Adrenal gland (tissue), 19 donors: ENCODE measurements at regions of chr1 and their contacts with region 1.

Region 1: GRCh38 chr1:238252033-238252802 is 361.5 kb upstream of the ZP4 start:
- DNase-seq: peak; percentile 26 to 81 (median 59)
- H3K4me3 ChIP-seq: no peak overlapping the region
- H3K27ac ChIP-seq: no peak overlapping the region
- H3K4me1 ChIP-seq: no peaks in the 10 kb centered on the region
- H3K27me3 ChIP-seq: no peaks in the 10 kb centered on the region
- CTCF ChIP-seq: peak; percentile 29 to 52 (median 42)
- POLR2A ChIP-seq: no peak

Region 2: GRCh38 chr1:238318294-238319110 is 66.3 kb after region 1 on chr1:
- intact Hi-C with region 1: no loop called
- DNase-seq: no peak
- H3K4me3 ChIP-seq: no peak overlapping the region
- H3K27ac ChIP-seq: no peak overlapping the region
- H3K4me1 ChIP-seq: no peaks in the 10 kb centered on the region
- H3K27me3 ChIP-seq: no peaks in the 10 kb centered on the region
- CTCF ChIP-seq: no peak
- POLR2A ChIP-seq: no peak

Region 3: DNA sequence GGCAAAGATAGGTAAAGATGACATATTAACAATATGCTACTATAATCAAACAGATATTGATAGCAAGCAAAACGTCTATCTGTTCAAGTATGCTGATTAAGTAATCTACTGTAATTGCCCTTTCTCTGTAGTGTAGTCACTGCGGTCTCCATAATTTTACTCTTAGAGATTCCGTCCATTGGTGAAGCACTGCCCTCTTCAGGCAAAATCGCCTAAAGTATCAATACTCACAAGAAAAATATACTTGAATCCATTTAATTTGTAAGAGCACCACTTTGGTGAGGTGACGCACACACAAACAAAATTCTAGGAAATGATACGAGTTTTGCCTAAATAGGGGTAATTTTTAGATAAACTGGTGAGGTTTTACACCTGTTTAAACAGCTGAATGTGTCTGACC is 699.6 kb after region 1 on chr1:
- intact Hi-C with region 1: loop called in 1 of 2 experiments (anchors 5 kb)
- DNase-seq: peak; percentile 16 to 58 (median 23)
- H3K4me3 ChIP-seq: no peak overlapping the region
- H3K27ac ChIP-seq: no peak overlapping the region
- H3K4me1 ChIP-seq: no peaks in the 10 kb centered on the region
- H3K27me3 ChIP-seq: no peaks in the 10 kb centered on the region
- CTCF ChIP-seq: peak; percentile 11 to 48 (median 34)
- POLR2A ChIP-seq: no peak

Region 4: DNA sequence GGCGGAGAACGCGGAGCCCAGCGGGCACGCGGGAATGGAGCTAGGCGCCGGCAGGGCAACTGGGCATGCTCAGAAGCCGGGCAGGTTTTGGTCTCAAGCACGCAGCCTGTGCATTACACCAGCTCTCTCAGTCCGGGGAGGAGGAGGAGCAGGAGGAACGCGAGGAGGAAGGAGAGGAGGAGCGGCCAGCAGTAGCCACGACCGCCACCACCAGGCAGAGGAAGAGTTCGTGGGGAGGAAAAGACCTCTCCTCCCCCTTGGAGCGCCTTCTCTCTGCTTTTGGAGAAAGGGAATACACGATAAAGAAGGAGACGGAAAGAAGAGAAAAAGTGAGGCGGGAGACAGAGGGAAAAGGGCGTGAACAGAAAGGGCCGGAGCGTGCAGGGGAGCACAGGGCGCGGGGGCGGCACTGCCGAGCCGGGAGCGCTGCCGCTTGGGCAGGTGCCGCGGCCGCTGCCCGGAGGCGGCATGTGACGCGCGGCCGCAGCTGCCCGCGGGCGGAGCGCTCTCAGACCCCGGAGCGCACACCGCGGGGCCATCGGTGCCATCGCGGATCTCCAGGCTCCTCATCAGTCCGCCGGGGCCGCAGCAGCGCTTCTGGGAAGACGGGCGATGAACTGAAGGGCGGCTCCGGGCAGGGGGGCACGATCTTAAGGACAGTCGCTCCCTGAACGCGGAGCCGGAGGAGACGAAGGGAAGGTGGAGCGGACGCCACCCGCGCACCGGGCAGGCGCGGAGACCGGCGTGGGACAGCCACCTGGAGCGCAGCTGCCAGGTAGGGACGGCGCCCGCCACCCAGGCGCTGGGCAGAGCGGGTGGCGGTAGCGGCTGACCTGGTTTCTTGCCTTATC is 1134.5 kb after region 1 on chr1 and contains the start of gene CHRM3:
- intact Hi-C with region 1: no loop called
- DNase-seq: peak; percentile 19 to 63 (median 34)
- H3K4me3 ChIP-seq: peak within 1 kb of the TSS in 1 of 4 donors; percentile 44
- H3K27ac ChIP-seq: no peak within 1 kb of the TSS
- H3K4me1 ChIP-seq: no peaks in the 10 kb centered on the region
- H3K27me3 ChIP-seq: peaks cover 33% of the 10 kb centered on the region
- CTCF ChIP-seq: peak in 1 of 6 experiments; percentile 10
- POLR2A ChIP-seq: no peak
- total RNA-seq, gene CHRM3: 0.55 to 6.2 (median 1.3) TPM